Left ventricle myocardium superior (tissue), 1 donor: ENCODE measurements at regions of chr2 and their contacts with region 1.

Region 1: GRCh38 chr2:45765728-45766254 is 114.3 kb downstream of the PRKCE start:
- DNase-seq: no peak
- ATAC-seq: peak; percentile 80

Region 2: DNA sequence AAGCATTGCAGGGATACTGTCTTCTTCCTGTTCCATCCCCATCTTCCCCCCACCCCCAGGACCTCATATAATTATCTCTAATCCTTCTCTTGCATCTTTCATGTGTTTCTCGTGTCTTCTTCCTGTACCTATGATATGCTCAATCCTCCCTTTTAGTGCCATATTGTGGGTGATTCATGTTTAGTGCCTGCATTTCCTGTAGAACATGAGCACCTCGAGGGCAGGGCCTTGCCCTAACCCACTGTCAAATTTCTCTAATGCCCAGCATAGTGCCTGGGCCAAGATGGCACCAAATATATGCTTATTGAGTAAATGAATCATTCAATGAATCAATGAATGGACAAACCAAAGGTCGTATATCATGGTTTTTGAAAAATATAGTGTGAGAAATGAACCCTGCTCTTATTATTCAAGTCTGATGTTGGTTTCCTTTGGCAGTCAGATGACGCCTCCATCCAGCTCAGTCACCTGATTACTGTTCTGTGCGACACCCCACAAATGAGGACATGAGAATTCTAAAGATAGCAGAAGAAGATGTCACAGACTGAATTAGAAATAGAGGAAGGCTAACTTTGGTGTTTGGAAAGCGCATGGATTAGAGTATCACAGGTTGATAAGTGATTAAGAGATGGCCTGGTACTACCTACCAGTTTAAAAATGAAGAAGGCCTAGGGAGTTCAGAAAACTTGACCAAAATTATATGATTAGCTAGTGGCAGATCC is 164.0 kb after region 1 on chr2:
- intact Hi-C with region 1: loop called (anchors 5 kb)
- DNase-seq: no peak
- ATAC-seq: peak; percentile 18